ENCODE measurements at regions of chr15 and their contacts with region 1.

Region 1: DNA sequence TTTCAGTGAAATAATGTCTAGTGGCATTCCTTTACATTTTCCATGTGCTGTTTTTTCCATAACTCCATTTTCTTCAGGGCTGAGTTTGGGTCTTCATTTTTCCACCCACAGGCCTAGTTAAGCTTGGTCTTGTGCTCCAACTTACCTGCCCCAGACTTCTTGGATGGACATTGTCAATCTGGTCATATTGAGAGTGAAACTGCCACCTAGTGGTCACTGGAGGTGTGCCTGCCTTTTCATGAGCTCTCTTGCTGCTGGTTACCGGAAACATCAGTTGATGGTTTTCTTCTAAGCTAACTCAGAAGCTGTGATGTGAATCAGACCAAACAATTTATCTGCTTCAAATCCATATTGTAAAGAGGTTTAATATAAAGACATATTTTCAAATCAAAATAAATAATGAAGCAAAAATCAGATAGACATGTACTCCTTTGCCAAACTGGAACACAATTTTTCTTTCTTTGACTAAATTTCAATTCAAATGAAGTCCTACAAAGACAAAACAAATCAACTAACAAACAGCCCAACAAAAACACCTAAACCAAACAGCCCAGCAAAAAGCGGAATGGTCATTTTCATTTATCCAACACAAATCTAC is 135.1 kb upstream of the RASGRP1 start:
- DNase-seq: peak; percentile 77
- ATAC-seq: peak; percentile 78
- H3K4me3 ChIP-seq: no peak overlapping the region
- H3K4me3 Mint-ChIP-seq: no peak overlapping the region
- H3K27ac ChIP-seq: no peak overlapping the region
- H3K27ac Mint-ChIP-seq: no peak overlapping the region
- H3K4me1 ChIP-seq: no peaks in the 10 kb centered on the region
- H3K4me1 Mint-ChIP-seq: peaks cover 2% of the 10 kb centered on the region
- H3K27me3 ChIP-seq: no peaks in the 10 kb centered on the region
- H3K27me3 Mint-ChIP-seq: peaks cover 3% of the 10 kb centered on the region
- CTCF ChIP-seq: peak; percentile 94

Region 2: DNA sequence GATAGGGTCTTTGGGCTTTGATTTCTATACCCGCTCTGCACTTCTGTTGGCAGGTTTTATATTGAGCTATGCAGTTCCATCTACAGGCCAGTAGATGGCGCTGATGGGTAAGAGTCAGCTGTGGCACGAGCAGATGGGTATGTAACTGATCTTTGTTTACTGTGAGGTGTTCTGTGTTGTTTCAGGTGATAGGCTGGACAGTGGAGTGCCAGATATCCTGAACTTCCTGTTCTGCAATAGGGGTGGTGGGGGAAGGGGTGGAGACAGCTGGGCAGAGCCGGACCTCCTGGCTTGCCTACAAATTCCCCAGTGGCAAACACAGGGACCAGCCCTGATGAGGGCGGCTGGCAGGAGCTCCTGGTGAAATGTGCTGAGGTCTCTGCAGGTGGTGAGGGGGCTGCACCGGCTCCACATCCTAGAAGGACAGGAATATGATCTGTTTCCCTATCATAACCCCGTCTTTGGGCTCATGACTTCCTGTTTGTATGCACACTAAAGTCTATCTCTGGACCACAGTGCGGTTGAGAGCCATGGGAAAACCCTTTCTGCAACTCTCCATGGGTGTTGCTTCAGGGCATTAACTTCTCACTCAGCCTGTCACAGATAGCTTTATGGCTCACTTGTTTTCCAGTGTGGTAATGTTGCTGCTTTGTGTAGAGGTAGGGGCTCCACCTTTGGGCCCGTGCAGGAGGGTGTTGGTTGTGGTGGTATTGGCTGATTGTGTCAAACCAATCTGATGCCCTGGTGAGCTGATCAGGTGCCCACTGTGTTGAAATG is 259.2 kb before region 1 on chr15:
- CTCF ChIA-PET with region 1: interaction called, 218 read pairs
- POLR2A ChIA-PET with region 1: no interaction called
- intact Hi-C with region 1: loop called (anchors 1 kb)
- DNase-seq: peak; percentile 76
- ATAC-seq: peak; percentile 95
- H3K4me3 ChIP-seq: no peak overlapping the region
- H3K4me3 Mint-ChIP-seq: no peak overlapping the region
- H3K27ac ChIP-seq: no peak overlapping the region
- H3K27ac Mint-ChIP-seq: no peak overlapping the region
- H3K4me1 ChIP-seq: peaks cover 0 to 5% of the 10 kb centered on the region in 2 donors
- H3K4me1 Mint-ChIP-seq: peaks cover 2% of the 10 kb centered on the region
- H3K27me3 ChIP-seq: peaks cover 0 to 2% (median 0%) of the 10 kb centered on the region in 4 experiments
- H3K27me3 Mint-ChIP-seq: peaks cover 39% of the 10 kb centered on the region
- CTCF ChIP-seq: peak; percentile 97

Region 3: DNA sequence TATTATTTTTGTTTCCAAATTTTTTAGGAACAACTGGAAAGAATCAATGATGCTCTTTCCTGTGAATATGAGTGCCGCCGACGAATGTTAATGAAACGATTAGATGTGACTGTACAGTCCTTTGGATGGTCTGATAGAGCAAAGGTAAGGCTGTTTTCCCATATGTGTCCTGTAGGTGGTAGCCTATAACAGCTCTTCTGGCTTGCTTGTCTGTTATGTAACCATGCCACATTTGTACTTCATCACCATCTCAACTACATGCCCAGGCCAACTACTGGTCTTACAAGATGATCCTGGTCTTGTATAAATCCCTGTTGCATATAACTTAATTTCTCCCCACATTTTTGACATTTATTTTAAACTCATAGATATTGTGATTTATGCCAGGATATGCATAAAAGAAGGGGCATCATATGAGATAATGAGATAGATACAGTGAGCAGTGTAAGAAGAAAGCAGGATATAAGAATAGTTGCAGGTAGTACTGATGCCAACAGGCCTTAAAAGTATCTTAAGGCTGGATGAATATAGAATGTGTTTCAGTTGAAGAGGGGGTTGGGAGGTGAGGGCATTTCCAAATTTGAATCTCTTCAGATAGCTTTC is 225.5 kb before region 1 on chr15:
- CTCF ChIA-PET with region 1: interaction called, 118 read pairs
- POLR2A ChIA-PET with region 1: no interaction called
- intact Hi-C with region 1: loop called (anchors 1 kb)
- DNase-seq: peak; percentile 73
- ATAC-seq: peak; percentile 99
- H3K4me3 ChIP-seq: no peak overlapping the region
- H3K4me3 Mint-ChIP-seq: no peak overlapping the region
- H3K27ac ChIP-seq: no peak overlapping the region
- H3K27ac Mint-ChIP-seq: no peak overlapping the region
- H3K4me1 ChIP-seq: no peaks in the 10 kb centered on the region
- H3K4me1 Mint-ChIP-seq: peaks cover 2% of the 10 kb centered on the region
- H3K27me3 ChIP-seq: no peaks in the 10 kb centered on the region
- H3K27me3 Mint-ChIP-seq: no peaks in the 10 kb centered on the region
- CTCF ChIP-seq: peak; percentile 89

Region 4: DNA sequence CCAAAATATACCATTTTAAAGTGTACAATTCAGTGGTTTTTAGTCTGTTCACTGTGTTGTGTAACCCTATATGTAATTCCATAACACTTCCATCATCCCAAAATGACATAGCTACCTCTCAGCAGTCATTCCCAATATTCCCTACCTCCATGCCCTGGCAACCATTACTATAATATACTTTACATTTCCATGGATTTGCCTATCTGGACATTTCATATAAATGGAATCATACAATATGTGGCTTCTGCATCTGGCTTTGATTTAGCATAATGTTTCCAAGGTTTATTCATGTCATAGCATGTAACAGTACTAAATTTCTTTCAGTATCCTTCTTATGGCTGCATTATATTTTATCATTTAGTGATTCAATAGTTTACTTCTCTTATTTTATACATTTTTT is 220.5 kb before region 1 on chr15:
- CTCF ChIA-PET with region 1: interaction called, 118 read pairs
- POLR2A ChIA-PET with region 1: no interaction called
- intact Hi-C with region 1: loop called (anchors 1 kb)
- DNase-seq: no peak
- ATAC-seq: no peak
- H3K4me3 ChIP-seq: no peak overlapping the region
- H3K4me3 Mint-ChIP-seq: no peak overlapping the region
- H3K27ac ChIP-seq: no peak overlapping the region
- H3K27ac Mint-ChIP-seq: no peak overlapping the region
- H3K4me1 ChIP-seq: no peaks in the 10 kb centered on the region
- H3K4me1 Mint-ChIP-seq: peaks cover 9% of the 10 kb centered on the region
- H3K27me3 ChIP-seq: no peaks in the 10 kb centered on the region
- H3K27me3 Mint-ChIP-seq: no peaks in the 10 kb centered on the region
- CTCF ChIP-seq: no peak

Region 5: GRCh38 chr15:38490242-38490922 is 209.3 kb before region 1 on chr15:
- CTCF ChIA-PET with region 1: interaction called, 12 read pairs
- POLR2A ChIA-PET with region 1: no interaction called
- intact Hi-C with region 1: no loop called
- DNase-seq: no peak
- ATAC-seq: no peak
- H3K4me3 ChIP-seq: no peak overlapping the region
- H3K4me3 Mint-ChIP-seq: no peak overlapping the region
- H3K27ac ChIP-seq: no peak overlapping the region
- H3K27ac Mint-ChIP-seq: no peak overlapping the region
- H3K4me1 ChIP-seq: no peaks in the 10 kb centered on the region
- H3K4me1 Mint-ChIP-seq: no peaks in the 10 kb centered on the region
- H3K27me3 ChIP-seq: no peaks in the 10 kb centered on the region
- H3K27me3 Mint-ChIP-seq: no peaks in the 10 kb centered on the region
- CTCF ChIP-seq: no peak

Region 6: GRCh38 chr15:38722236-38722635 is 22.5 kb after region 1 on chr15:
- CTCF ChIA-PET with region 1: interaction called, 12 read pairs
- POLR2A ChIA-PET with region 1: no interaction called
- intact Hi-C with region 1: no loop called
- DNase-seq: no peak
- ATAC-seq: no peak
- H3K4me3 ChIP-seq: no peak overlapping the region
- H3K4me3 Mint-ChIP-seq: no peak overlapping the region
- H3K27ac ChIP-seq: no peak overlapping the region
- H3K27ac Mint-ChIP-seq: no peak overlapping the region
- H3K4me1 ChIP-seq: no peaks in the 10 kb centered on the region
- H3K4me1 Mint-ChIP-seq: no peaks in the 10 kb centered on the region
- H3K27me3 ChIP-seq: no peaks in the 10 kb centered on the region
- H3K27me3 Mint-ChIP-seq: no peaks in the 10 kb centered on the region
- CTCF ChIP-seq: no peak

Measured in B cell (primary cell).